Right ventricle myocardium inferior (tissue), 1 donor: ENCODE measurements at regions of chr16 and their contacts with region 1.

Region 1: GRCh38 chr16:68528686-68529379 is 10.3 kb upstream of the ZFP90 start:
- DNase-seq: peak; percentile 91
- ATAC-seq: peak; percentile 90

Region 2: DNA sequence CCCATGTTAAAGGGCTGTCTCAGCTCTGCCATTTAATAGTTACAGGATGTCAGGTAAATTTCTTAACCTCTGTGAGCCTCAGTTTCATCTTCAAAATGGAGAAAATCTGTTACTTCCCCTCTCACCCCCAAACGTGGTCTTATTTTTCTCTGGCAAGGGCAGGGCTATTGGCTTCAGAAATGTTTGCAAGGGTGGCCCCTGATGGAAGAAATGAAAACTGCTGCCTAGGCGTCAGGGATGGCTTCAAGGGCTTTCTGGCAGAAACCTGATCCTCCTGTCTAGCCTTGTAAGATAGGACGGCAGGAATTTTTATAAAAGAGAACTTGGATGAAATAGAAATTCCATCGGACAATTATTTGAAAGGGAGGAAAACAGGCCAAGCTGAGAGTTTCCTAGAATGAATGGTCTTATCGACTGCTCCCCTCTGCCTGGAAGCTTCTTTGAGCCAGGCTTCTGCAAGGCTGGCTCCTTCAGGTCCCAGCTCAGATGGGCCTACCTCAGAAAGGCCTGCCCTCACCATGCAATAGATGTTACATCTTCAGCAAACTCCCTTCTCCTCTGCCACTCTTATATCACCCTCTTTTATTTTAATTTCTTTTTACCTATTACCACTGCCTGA is 271.5 kb after region 1 on chr16:
- intact Hi-C with region 1: loop called (anchors 2 kb)
- DNase-seq: no peak
- ATAC-seq: no peak

Region 3: GRCh38 chr16:68843482-68844210 is 314.8 kb after region 1 on chr16 and contains the start of gene TANGO6:
- intact Hi-C with region 1: loop called (anchors 2 kb)
- DNase-seq: peak; percentile 93
- ATAC-seq: peak; percentile 99
- total RNA-seq, gene TANGO6: 9.3 TPM

Region 4: DNA sequence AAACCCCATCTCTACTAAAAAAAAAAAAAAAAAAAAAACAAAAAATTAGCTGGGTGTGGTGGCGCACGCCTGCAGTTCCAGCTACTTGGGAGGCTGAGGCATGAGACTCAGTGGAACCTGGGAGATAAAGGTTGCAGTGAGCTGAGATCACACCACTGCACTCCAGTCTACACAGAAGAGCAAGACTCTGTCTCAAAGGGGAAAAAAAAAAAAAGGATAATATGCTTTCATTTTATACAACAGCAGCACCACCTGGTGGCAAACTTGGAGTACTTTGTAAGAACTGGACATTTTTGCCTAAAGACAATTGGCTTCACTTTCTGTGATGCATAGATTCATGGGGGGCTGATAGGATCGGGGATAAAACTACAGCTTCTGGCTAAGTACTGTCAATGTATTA is 595.1 kb after region 1 on chr16:
- intact Hi-C with region 1: loop called (anchors 5 kb)
- DNase-seq: no peak
- ATAC-seq: no peak